ENCODE measurements at regions of chr17 and their contacts with region 1.

Region 1: DNA sequence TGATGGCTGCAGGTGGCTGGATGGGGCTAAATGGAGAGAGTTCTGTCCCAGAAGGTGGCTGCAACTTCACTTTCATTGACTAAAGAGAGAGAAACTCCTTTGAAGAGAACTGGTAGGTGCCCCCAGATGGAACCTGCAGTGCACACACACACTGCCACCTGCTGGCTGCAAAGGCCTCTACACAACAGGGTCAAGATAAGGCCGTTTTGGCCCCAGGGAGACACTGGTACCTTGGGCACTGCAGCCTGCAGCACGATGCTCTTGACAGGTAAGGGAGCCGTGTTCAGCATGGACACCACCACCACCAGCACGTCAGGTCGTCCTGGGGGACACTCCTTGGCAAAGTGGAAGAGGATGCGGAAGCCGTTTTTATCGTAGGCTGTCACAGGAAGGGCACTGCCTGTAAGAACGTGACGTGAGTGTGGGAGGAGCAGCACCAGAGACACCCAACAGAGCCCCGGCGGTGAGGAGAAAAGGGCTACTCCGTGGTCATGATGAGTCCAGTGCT is 22.7 kb downstream of the GGA3 start:
- DNase-seq: peak; percentile 65
- H3K4me3 Mint-ChIP-seq: no peak overlapping the region
- H3K27ac Mint-ChIP-seq: peak overlapping the region; percentile 84
- H3K4me1 Mint-ChIP-seq: peaks cover 25% of the 10 kb centered on the region
- H3K27me3 Mint-ChIP-seq: no peaks in the 10 kb centered on the region

Region 2: DNA sequence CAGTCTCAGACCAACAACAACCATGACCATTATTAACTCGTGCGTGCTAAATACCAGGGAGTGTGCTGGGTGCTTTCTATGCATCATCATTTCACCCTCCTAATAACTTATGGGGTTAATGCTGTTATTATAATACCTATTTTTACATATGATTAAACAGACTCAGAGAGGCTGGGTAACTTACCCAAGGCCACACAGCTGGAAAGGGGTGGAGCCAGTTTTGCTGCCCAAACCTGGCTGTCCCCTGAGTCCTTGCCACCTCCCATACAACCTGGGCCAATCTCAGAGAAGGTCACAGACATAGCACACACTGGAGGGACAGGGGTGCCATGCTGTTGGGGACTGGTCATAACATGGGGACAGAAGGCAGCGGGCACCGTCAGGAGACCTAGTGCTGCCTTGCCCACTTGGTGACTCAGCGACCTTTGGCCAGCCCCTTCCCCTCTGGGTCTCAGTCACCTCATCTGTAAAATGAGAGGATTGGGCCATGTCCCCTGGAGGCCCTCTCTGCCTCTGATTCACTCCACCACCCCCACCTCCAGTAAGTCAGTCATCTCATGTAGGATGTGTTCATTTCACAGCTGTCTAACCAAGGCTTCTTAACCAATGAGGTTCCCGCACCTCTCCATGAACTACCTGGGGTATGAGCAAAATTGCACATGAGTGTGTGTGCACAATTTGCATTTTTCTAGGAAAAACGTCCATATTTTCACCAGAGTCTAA is 333.9 kb before region 1 on chr17:
- CTCF ChIA-PET with region 1: no interaction called
- POLR2A ChIA-PET with region 1: no interaction called
- DNase-seq: no peak
- H3K4me3 Mint-ChIP-seq: no peak overlapping the region
- H3K27ac Mint-ChIP-seq: peak overlapping the region; percentile 41
- H3K4me1 Mint-ChIP-seq: peaks cover 2% of the 10 kb centered on the region
- H3K27me3 Mint-ChIP-seq: peaks cover 8% of the 10 kb centered on the region

Region 3: GRCh38 chr17:75174996-75175395 is 63.7 kb before region 1 on chr17:
- CTCF ChIA-PET with region 1: no interaction called
- POLR2A ChIA-PET with region 1: no interaction called
- DNase-seq: no peak
- H3K4me3 Mint-ChIP-seq: no peak overlapping the region
- H3K27ac Mint-ChIP-seq: no peak overlapping the region
- H3K4me1 Mint-ChIP-seq: peaks cover 44% of the 10 kb centered on the region
- H3K27me3 Mint-ChIP-seq: no peaks in the 10 kb centered on the region

Region 4: DNA sequence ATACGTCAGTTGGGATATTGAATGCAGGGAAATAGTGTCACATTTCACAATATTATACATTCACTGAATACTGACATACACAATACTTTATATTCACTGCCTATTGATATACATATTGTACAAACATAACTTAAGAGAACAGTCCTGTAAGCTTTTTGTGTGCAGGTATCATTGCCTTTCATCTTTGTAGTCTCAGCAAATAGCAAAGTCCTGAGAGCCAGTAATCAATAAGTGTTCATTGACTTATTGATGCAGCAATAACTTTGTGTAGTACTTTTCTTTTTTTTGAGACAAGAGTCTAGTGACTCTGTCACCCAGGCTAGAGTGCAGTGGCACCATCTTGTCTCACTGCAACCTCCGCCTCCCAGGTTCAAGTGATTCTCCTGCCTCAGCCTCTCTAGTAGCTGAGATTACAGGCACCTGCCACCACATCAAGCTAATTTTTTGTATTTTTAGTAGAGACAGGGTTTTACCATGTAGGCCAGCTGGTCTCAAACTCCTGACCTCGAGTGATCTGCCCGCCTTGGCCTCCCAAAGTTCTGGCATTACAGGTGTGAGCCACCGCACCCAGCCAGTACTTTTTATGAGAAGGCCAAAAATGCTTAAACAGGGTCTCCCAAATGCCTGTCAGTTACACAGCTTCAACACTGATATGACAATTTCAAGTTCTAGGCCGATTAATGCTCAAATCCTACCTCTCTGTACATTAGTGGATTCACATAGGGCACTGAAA is 38.7 kb before region 1 on chr17:
- CTCF ChIA-PET with region 1: interaction called, 11 read pairs
- POLR2A ChIA-PET with region 1: no interaction called
- DNase-seq: no peak
- H3K4me3 Mint-ChIP-seq: no peak overlapping the region
- H3K27ac Mint-ChIP-seq: no peak overlapping the region
- H3K4me1 Mint-ChIP-seq: peaks cover 7% of the 10 kb centered on the region
- H3K27me3 Mint-ChIP-seq: no peaks in the 10 kb centered on the region

Region 5: DNA sequence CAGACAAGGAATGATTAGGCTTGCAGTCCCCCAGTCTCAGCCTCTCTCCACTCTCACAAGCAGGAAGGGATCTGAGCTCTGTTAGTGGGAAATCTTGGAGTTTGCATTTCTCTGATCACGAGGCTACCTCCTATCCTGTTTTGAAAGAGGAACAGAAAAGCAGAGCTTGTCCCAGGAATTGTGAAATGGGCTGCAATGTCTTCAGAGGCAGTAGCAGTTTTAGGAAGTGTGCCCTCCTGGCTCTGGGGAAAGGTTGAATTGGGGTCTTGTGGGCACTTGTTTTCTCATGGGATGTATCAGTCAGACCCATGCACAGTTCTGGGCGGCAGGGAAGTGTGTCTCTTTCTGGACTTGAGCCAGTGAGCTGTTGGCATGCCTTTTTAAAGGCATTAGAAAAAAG is 10.4 kb before region 1 on chr17:
- CTCF ChIA-PET with region 1: interaction called, 11 read pairs
- POLR2A ChIA-PET with region 1: no interaction called
- DNase-seq: no peak
- H3K4me3 Mint-ChIP-seq: no peak overlapping the region
- H3K27ac Mint-ChIP-seq: peak overlapping the region; percentile 3
- H3K4me1 Mint-ChIP-seq: no peaks in the 10 kb centered on the region
- H3K27me3 Mint-ChIP-seq: no peaks in the 10 kb centered on the region

Region 6: GRCh38 chr17:75250009-75250471 is 11.3 kb after region 1 on chr17:
- CTCF ChIA-PET with region 1: interaction called, 24 read pairs
- POLR2A ChIA-PET with region 1: no interaction called
- DNase-seq: peak; percentile 69
- H3K4me3 Mint-ChIP-seq: peak overlapping the region; percentile 56
- H3K27ac Mint-ChIP-seq: peak overlapping the region; percentile 84
- H3K4me1 Mint-ChIP-seq: peaks cover 57% of the 10 kb centered on the region
- H3K27me3 Mint-ChIP-seq: no peaks in the 10 kb centered on the region